Naive thymus-derived CD4-positive, alpha-beta T cell (primary cell): ENCODE measurements at regions of chr17 and their contacts with region 1.

Region 1: DNA sequence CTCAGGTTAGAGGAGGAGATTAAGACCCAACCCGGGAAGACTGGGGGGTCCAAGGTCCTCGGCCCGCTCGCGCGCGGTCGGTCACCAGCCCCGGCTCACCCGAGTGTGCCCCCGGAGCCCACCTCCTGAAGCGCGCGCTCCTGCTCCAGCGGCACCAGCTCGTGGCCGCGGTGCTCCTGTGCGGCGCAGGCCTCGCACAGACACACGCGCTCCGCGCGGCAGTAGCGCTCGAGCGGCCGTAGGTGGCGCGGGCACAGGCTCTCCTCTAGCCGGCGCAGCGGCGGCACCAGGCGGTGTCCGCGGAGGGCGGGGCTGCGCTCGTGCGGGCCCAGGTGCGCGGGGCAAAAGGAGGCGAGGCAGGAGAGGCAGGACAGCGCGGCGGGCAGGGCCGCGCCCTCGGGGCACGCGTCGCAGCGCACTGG is 618 bp downstream of the TRIM47 start:
- DNase-seq: peak; percentile 56 to 77 (median 69)
- ATAC-seq: peak; percentile 89
- H3K4me3 ChIP-seq: peak overlapping the region; percentile 74
- H3K4me3 Mint-ChIP-seq: peak overlapping the region; percentile 83 to 99 (median 90)
- H3K27ac ChIP-seq: peak overlapping the region; percentile 70
- H3K27ac Mint-ChIP-seq: peak overlapping the region; percentile 67 to 97 (median 89)
- H3K4me1 ChIP-seq: peaks cover 25 to 30% of the 10 kb centered on the region in 2 donors
- H3K4me1 Mint-ChIP-seq: peaks cover 28 to 57% (median 50%) of the 10 kb centered on the region in 7 donors
- H3K27me3 ChIP-seq: no peaks in the 10 kb centered on the region
- H3K27me3 Mint-ChIP-seq: peaks cover 0 to 28% (median 0%) of the 10 kb centered on the region in 5 donors

Region 2: DNA sequence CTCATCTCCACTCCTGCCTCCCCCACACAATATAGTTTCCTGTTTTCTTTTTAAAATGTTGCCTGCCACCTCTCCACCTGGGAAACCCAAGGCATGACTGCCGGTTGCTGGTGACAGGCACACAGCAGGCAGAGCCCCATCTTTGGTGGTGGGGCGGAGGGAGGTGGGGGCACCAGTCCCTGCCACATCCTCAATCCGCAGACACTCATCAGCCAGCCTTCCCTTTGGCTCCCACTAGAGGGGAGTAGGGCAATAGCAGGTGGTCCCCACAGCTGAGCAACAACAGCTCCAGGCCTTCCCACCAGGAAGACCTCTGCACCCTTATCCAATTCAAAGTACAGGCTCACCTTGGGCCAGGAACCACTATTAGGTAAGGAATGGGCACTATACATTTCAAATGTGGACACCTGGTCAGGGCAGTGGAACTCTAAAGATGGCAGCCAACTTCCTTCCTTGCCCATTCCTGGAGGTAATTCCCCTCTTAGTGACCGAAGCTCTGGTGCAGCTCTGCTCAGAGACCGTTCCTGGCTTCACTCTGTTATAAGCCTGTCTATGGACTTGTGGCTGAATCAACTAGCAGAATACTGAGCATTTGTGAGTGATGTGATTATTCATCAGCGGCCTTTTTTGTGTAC is 224.7 kb before region 1 on chr17:
- CTCF ChIA-PET with region 1: no interaction called
- POLR2A ChIA-PET with region 1: no interaction called
- intact Hi-C with region 1: no loop called
- DNase-seq: peak in 5 of 9 donors; percentile 20 to 30 (median 28)
- ATAC-seq: peak; percentile 85
- H3K4me3 ChIP-seq: no peak overlapping the region
- H3K4me3 Mint-ChIP-seq: no peak overlapping the region
- H3K27ac ChIP-seq: no peak overlapping the region
- H3K27ac Mint-ChIP-seq: peak overlapping the region in 2 of 9 donors; percentile 38 to 51
- H3K4me1 ChIP-seq: no peaks in the 10 kb centered on the region
- H3K4me1 Mint-ChIP-seq: peaks cover 0 to 11% (median 4%) of the 10 kb centered on the region in 7 donors
- H3K27me3 ChIP-seq: no peaks in the 10 kb centered on the region
- H3K27me3 Mint-ChIP-seq: no peaks in the 10 kb centered on the region

Region 3: DNA sequence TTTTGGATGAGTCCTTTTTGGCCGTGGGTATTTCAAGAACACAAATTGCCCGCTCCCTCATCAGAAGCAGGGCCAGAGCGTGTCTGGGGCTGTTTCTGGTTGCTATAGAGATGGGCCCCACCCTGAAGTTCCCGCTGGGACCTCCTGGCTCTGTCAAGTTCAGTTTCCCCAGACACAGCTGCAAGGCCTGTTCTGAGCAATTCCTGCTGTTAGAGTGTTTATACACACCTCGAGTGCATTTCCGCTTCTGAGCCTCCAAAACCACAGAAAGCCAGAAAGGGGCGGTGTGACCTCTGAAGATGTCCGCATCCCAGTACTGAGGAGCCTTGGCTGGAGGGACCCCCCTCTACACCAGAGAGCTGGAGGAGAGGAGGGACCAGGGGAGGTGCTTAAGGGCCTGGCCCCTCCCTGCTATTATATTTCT is 13.3 kb before region 1 on chr17:
- CTCF ChIA-PET with region 1: interaction called, 25 read pairs
- POLR2A ChIA-PET with region 1: interaction called, 354 read pairs
- intact Hi-C with region 1: loop called in 1 of 2 experiments (anchors 1 kb)
- DNase-seq: peak in 4 of 9 donors; percentile 34 to 54 (median 38)
- ATAC-seq: peak; percentile 70
- H3K4me3 ChIP-seq: no peak overlapping the region
- H3K4me3 Mint-ChIP-seq: peak overlapping the region in 6 of 10 donors; percentile 8 to 72 (median 50)
- H3K27ac ChIP-seq: peak overlapping the region; percentile 49
- H3K27ac Mint-ChIP-seq: peak overlapping the region; percentile 48 to 93 (median 84)
- H3K4me1 ChIP-seq: peaks cover 11 to 18% of the 10 kb centered on the region in 2 donors
- H3K4me1 Mint-ChIP-seq: peaks cover 10 to 29% (median 22%) of the 10 kb centered on the region in 7 donors
- H3K27me3 ChIP-seq: no peaks in the 10 kb centered on the region
- H3K27me3 Mint-ChIP-seq: no peaks in the 10 kb centered on the region

Region 4: DNA sequence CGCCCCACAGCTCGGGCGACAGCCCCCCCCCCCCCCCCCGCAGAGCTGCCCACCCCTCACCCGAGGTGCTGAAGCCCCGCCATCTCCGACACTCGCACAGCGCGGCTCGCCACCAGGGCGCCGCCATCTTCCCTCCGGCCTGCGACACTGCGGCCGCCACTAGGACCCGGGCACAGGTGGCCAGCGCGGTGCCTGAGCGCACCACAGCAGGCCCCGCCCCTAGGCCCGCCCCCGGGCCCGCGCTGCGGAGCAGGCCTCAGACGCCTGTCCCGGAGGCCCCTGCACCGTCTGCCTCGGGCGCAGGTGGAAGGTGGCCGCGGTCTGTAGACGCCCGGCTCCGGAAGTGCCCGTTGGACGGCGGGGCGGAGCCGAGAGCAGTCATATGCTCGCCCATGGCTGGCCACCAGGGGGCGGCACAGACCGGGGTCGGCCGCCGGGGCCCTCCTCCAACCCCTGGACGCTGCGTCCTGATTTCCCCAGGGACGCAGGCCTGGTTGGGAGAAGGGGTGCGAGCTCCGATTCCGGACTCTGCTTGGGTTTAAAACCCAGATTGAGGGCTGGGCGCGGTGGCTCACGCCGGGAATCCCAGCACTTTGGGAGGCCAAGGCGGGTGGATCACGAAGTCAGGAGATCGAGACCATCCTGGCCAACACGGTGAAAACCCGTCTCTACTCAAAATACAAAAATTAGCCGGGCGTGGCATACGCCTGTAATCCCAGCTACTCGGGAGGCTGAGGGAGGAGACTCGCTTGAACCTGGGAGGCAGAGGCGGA is 27.2 kb after region 1 on chr17 and contains the start of gene MRPL38:
- CTCF ChIA-PET with region 1: interaction called, 6 read pairs
- POLR2A ChIA-PET with region 1: interaction called, 106 read pairs
- intact Hi-C with region 1: loop called (anchors 2 kb)
- DNase-seq: peak; percentile 88 to 97 (median 91)
- ATAC-seq: peak; percentile 99
- H3K4me3 ChIP-seq: peak within 1 kb of the TSS; percentile 72
- H3K4me3 Mint-ChIP-seq: peak within 1 kb of the TSS; percentile 83 to 97 (median 92)
- H3K27ac ChIP-seq: peak within 1 kb of the TSS; percentile 85
- H3K27ac Mint-ChIP-seq: peak within 1 kb of the TSS; percentile 90 to 97 (median 95)
- H3K4me1 ChIP-seq: peaks cover 0 to 5% of the 10 kb centered on the region in 2 donors
- H3K4me1 Mint-ChIP-seq: peaks cover 2 to 16% (median 14%) of the 10 kb centered on the region in 7 donors
- H3K27me3 ChIP-seq: no peaks in the 10 kb centered on the region
- H3K27me3 Mint-ChIP-seq: no peaks in the 10 kb centered on the region
- total RNA-seq, gene MRPL38: 81.0 to 154 (median 128) TPM

Region 5: GRCh38 chr17:75940724-75941441 is 63.1 kb after region 1 on chr17 and contains the start of gene FBF1:
- CTCF ChIA-PET with region 1: no interaction called
- POLR2A ChIA-PET with region 1: no interaction called
- intact Hi-C with region 1: loop called in 1 of 2 experiments (anchors 1 kb)
- DNase-seq: peak; percentile 74 to 92 (median 82)
- ATAC-seq: peak; percentile 100
- H3K4me3 ChIP-seq: peak within 1 kb of the TSS; percentile 89
- H3K4me3 Mint-ChIP-seq: peak within 1 kb of the TSS; percentile 77 to 93 (median 90)
- H3K27ac ChIP-seq: peak within 1 kb of the TSS; percentile 86
- H3K27ac Mint-ChIP-seq: peak within 1 kb of the TSS; percentile 74 to 94 (median 89)
- H3K4me1 ChIP-seq: peaks cover 5 to 11% of the 10 kb centered on the region in 2 donors
- H3K4me1 Mint-ChIP-seq: peaks cover 9 to 19% (median 11%) of the 10 kb centered on the region in 7 donors
- H3K27me3 ChIP-seq: no peaks in the 10 kb centered on the region
- H3K27me3 Mint-ChIP-seq: no peaks in the 10 kb centered on the region
- total RNA-seq, gene FBF1: 19.9 to 48.1 (median 29.0) TPM